ENCODE measurements at regions of chr9 and their contacts with region 1.

Region 1: DNA sequence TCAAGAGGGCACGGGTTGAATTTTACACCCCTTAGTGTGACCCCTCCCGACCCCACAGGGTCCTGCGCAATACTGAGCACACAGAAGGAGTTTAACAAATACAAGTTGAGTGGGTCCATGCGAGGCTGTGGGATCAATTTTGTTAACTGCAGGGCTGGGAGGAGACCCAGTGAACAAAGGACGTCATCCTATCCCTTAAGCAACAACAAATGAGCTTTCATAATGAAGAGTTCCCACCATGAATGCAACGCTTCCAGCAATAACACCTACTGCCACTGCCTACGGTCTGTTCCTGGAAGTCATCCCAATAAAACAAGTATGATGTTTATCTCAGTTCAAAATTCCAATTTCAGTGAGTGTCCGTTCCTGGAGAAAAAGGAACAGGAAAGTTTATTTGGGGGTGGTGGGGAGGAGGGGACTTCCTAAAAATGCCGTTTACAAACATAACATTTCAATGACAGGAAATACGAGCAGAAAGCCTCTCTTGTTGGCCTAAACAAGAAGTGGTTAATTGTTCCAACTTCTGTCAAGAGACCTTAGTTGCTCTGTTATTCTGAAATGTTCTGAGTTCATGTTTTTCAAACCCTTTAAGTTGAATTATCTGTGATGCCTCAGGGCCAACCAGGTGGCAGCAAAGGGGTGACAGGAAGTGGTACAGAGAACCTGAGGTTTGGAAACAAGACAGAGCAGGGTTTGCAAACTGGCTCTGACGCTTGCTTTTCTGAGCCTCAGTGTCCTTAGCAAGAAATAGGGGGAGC is 65.8 kb upstream of the PLPP6 start:
- DNase-seq: peak in 7 of 9 donors; percentile 81 to 94 (median 91)
- ATAC-seq: peak; percentile 95
- H3K4me3 ChIP-seq: peak overlapping the region; percentile 13
- H3K4me3 Mint-ChIP-seq: peak overlapping the region; percentile 29 to 80 (median 68)
- H3K27ac ChIP-seq: peak overlapping the region; percentile 74
- H3K27ac Mint-ChIP-seq: peak overlapping the region; percentile 58 to 99 (median 97)
- H3K4me1 ChIP-seq: peaks cover 30 to 53% of the 10 kb centered on the region in 2 donors
- H3K4me1 Mint-ChIP-seq: peaks cover 32 to 76% (median 60%) of the 10 kb centered on the region in 7 donors
- H3K27me3 ChIP-seq: no peaks in the 10 kb centered on the region
- H3K27me3 Mint-ChIP-seq: peaks cover 0 to 5% (median 0%) of the 10 kb centered on the region in 5 donors

Region 2: GRCh38 chr9:4382722-4383317 is 213.5 kb before region 1 on chr9:
- CTCF ChIA-PET with region 1: no interaction called
- POLR2A ChIA-PET with region 1: interaction called, 3 read pairs
- intact Hi-C with region 1: loop called in 1 of 2 experiments (anchors 5 kb)
- DNase-seq: peak in 6 of 9 donors; percentile 7 to 54 (median 42)
- ATAC-seq: no peak
- H3K4me3 ChIP-seq: no peak overlapping the region
- H3K4me3 Mint-ChIP-seq: no peak overlapping the region
- H3K27ac ChIP-seq: no peak overlapping the region
- H3K27ac Mint-ChIP-seq: no peak overlapping the region
- H3K4me1 ChIP-seq: no peaks in the 10 kb centered on the region
- H3K4me1 Mint-ChIP-seq: peaks cover 0 to 10% (median 0%) of the 10 kb centered on the region in 7 donors
- H3K27me3 ChIP-seq: no peaks in the 10 kb centered on the region
- H3K27me3 Mint-ChIP-seq: peaks cover 0 to 4% (median 0%) of the 10 kb centered on the region in 5 donors

Region 3: DNA sequence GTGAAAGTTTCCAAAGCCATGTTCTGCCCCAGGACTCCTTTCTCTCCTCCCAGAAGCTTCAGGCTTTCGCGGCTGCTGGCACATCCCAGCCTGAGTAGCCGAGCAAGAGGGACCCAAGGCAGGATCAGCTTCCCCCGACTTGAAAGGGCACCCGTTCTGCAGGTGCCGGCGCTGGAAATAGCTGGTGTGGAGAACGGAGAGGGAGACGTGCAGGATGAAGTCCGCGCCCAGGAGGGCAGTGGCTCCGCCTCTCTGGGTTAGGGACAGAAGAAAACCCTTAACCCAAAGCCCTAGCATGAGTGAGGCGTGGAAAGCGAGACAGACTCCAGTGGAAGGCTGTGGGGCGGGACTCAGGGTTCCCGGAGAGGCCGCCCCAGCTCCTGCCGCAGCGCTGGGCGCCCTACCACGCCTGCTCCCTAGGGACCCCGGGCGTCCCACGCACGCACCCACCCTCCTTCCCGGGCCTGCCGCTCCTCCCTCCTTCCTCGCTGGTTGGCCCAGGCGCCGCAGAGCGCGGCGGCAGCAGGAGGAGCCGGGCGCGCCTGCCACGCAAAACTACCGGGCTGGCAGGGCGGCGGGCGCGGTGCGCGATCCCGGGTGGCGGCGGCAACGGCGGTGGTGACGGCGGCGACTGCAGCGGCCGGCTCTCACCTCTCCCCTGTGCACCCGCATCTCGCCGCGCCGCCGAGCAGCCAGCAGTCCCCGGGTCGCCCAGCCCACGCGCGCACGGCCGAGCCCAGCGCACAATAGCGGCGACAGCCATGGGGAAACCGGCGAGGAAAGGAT is 106.2 kb before region 1 on chr9 and contains the start of gene SLC1A1:
- CTCF ChIA-PET with region 1: no interaction called
- POLR2A ChIA-PET with region 1: no interaction called
- intact Hi-C with region 1: loop called in 1 of 2 experiments (anchors 5 kb)
- DNase-seq: peak in 8 of 9 donors; percentile 8 to 36 (median 28)
- ATAC-seq: peak; percentile 50
- H3K4me3 ChIP-seq: peak within 1 kb of the TSS; percentile 70
- H3K4me3 Mint-ChIP-seq: peak within 1 kb of the TSS; percentile 72 to 92 (median 86)
- H3K27ac ChIP-seq: no peak within 1 kb of the TSS
- H3K27ac Mint-ChIP-seq: no peak within 1 kb of the TSS
- H3K4me1 ChIP-seq: peaks cover 0 to 17% of the 10 kb centered on the region in 2 donors
- H3K4me1 Mint-ChIP-seq: peaks cover 10 to 37% (median 22%) of the 10 kb centered on the region in 7 donors
- H3K27me3 ChIP-seq: peaks cover 6 to 21% of the 10 kb centered on the region in 2 donors
- H3K27me3 Mint-ChIP-seq: peaks cover 24 to 56% (median 43%) of the 10 kb centered on the region in 5 donors
- total RNA-seq, gene SLC1A1: 0.12 TPM in 1 of 5 experiments, not detected in the others

Region 4: DNA sequence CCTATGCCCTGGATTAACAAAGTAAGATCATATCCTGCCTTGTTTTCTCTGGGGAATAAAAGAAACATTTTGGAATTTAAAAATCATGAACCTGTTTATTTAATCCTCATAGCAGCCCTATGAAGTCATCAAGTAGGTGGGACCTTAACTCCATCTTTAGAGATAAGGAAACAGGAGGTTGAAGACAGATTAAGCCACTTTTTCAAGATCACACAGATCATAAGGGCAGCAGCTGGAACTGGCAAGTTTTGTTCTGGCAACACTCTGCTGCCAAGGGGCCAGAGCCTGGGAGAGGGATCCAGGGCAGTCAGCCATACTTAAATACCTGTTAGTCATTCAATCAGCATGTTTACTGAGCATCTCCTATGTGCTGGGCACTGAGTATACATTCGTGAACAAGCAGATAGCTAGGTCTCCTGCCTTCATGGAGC is 42.4 kb before region 1 on chr9:
- CTCF ChIA-PET with region 1: interaction called, 3 read pairs
- POLR2A ChIA-PET with region 1: interaction called, 9 read pairs
- intact Hi-C with region 1: loop called in 1 of 2 experiments (anchors 2 kb)
- DNase-seq: no peak
- ATAC-seq: no peak
- H3K4me3 ChIP-seq: no peak overlapping the region
- H3K4me3 Mint-ChIP-seq: peak overlapping the region in 5 of 10 donors; percentile 29 to 53 (median 39)
- H3K27ac ChIP-seq: no peak overlapping the region
- H3K27ac Mint-ChIP-seq: peak overlapping the region in 5 of 9 donors; percentile 16 to 94 (median 63)
- H3K4me1 ChIP-seq: peaks cover 0 to 33% of the 10 kb centered on the region in 2 donors
- H3K4me1 Mint-ChIP-seq: peaks cover 15 to 75% (median 55%) of the 10 kb centered on the region in 7 donors
- H3K27me3 ChIP-seq: no peaks in the 10 kb centered on the region
- H3K27me3 Mint-ChIP-seq: no peaks in the 10 kb centered on the region

Region 5: DNA sequence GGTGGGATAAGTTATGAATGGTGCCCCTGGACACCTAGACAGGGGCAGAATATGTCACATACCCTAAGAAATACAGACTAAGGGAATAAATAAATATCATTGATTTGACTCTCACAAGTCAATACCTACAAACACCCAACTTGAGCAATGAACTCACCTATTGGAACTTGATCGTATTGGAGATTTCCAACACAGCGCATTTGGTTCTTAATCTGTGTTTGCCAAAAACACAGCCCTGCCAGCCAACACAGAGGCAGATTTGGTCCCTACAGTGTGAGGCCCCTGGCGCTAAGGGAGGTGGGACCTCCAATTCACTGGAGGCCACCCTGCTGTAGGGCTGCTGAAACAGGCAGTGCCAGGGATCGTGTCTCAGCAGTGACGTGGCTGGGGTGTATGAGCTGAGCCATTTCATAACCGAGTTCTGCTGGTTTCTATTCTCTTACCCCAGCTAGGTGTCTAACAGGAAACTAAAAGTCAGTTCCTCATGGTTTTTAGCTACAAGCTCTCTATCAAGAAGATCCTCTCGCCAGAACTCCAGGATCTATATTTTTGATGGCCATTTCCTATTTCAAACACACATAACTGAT is 21.6 kb before region 1 on chr9:
- CTCF ChIA-PET with region 1: interaction called, 7 read pairs
- POLR2A ChIA-PET with region 1: interaction called, 10 read pairs
- intact Hi-C with region 1: loop called in 1 of 2 experiments (anchors 1 kb)
- DNase-seq: no peak
- ATAC-seq: no peak
- H3K4me3 ChIP-seq: no peak overlapping the region
- H3K4me3 Mint-ChIP-seq: peak overlapping the region in 2 of 10 donors; percentile 3 to 33
- H3K27ac ChIP-seq: no peak overlapping the region
- H3K27ac Mint-ChIP-seq: peak overlapping the region in 4 of 9 donors; percentile 16 to 86 (median 56)
- H3K4me1 ChIP-seq: peaks cover 4 to 11% of the 10 kb centered on the region in 2 donors
- H3K4me1 Mint-ChIP-seq: peaks cover 0 to 44% (median 32%) of the 10 kb centered on the region in 7 donors
- H3K27me3 ChIP-seq: no peaks in the 10 kb centered on the region
- H3K27me3 Mint-ChIP-seq: no peaks in the 10 kb centered on the region

Region 6: DNA sequence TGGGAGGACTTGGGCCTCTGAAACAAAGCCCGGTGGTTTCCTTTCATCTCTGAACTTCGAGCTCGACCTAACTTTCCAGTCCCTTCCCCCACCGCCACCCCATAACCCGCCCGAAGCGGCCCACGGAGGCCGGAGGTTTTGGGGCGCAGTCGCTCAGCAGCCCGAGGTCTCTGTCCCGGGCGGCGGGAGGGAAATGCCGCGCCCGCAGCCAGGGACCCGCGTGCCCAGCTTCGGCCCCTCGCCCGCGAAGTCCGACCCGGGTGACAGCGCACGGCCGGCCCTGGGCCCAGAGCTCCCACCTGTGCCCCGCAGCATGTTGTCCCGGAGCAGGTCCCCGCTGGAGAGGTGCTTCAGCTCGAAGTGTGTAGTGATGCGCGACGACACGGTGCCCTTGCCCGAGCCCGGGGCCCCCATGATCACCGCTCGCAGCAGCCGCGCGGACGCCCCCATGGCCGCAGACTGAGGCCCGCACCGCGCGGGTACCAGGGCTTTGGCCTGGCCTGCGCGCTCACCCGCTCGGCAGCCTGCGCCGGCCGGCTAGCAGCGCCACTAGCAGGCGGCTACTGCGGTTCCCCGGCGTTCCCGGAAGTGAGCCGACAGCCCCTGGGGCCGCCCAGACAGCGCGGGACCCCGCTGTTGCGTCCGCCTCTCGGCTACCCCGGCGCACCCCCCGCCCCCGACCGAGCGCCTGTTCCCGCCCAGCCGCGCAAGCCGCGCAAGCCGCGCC is 144.5 kb after region 1 on chr9 and contains the start of gene AK3:
- CTCF ChIA-PET with region 1: no interaction called
- POLR2A ChIA-PET with region 1: interaction called, 3 read pairs
- intact Hi-C with region 1: loop called in 1 of 2 experiments (anchors 2 kb)
- DNase-seq: peak; percentile 72 to 85 (median 83)
- ATAC-seq: peak; percentile 95
- H3K4me3 ChIP-seq: peak within 1 kb of the TSS; percentile 73
- H3K4me3 Mint-ChIP-seq: peak within 1 kb of the TSS; percentile 88 to 99 (median 94)
- H3K27ac ChIP-seq: peak within 1 kb of the TSS; percentile 86
- H3K27ac Mint-ChIP-seq: peak within 1 kb of the TSS; percentile 86 to 98 (median 93)
- H3K4me1 ChIP-seq: peaks cover 10 to 16% of the 10 kb centered on the region in 2 donors
- H3K4me1 Mint-ChIP-seq: peaks cover 22 to 49% (median 40%) of the 10 kb centered on the region in 7 donors
- H3K27me3 ChIP-seq: no peaks in the 10 kb centered on the region
- H3K27me3 Mint-ChIP-seq: no peaks in the 10 kb centered on the region
- total RNA-seq, gene AK3: 18.0 to 34.8 (median 25.8) TPM

Measured in naive thymus-derived CD4-positive, alpha-beta T cell (primary cell).